Psoas muscle (tissue), 8 donors: ENCODE measurements at regions of chrX and their contacts with region 1.

Region 1: DNA sequence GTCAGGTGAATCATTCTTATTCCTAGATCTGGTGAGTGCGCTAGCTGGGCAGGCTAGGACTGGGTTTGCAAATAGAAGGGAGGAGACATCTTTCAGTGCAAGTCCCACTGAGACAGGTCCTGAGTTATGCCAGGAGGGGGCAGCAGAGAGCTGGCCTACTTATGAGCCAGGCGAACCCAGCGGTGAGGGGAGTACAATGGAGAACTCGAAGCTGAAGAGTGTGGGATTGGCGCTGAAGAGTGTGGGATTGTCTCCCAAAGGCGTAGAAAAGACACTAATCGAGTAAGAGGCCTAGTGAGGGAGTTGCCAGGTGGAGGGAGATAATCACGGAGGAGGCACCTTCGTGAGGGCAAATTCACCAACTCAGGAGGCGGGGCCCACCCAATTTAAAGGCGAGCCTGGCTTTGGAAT is 91.7 kb upstream of the CXorf66 start:
- DNase-seq: peak; percentile 45 to 72
- ATAC-seq: peak; percentile 65 to 75 (median 70)
- H3K4me3 ChIP-seq: no peak overlapping the region
- H3K27ac ChIP-seq: no peak overlapping the region
- H3K4me1 ChIP-seq: no peaks in the 10 kb centered on the region
- H3K27me3 ChIP-seq: no peaks in the 10 kb centered on the region
- CTCF ChIP-seq: peak; percentile 73

Region 2: GRCh38 chrX:140664939-140665338 is 607.9 kb after region 1 on chrX:
- intact Hi-C with region 1: loop called (anchors 2 to 5 kb)
- DNase-seq: no peak
- ATAC-seq: no peak
- H3K4me3 ChIP-seq: no peak overlapping the region
- H3K27ac ChIP-seq: no peak overlapping the region
- H3K4me1 ChIP-seq: no peaks in the 10 kb centered on the region
- H3K27me3 ChIP-seq: no peaks in the 10 kb centered on the region
- CTCF ChIP-seq: peak; percentile 23